PC-9 (cell line): ENCODE measurements at regions of chr6 and their contacts with region 1.

Region 1: GRCh38 chr6:25534942-25535631 is 116.9 kb upstream of the SCGN start:
- DNase-seq: no peak
- H3K4me3 ChIP-seq: no peak overlapping the region
- H3K27ac ChIP-seq: no peak overlapping the region
- H3K4me1 ChIP-seq: no peaks in the 10 kb centered on the region
- H3K27me3 ChIP-seq: no peaks in the 10 kb centered on the region
- CTCF ChIP-seq: no peak

Region 2: GRCh38 chr6:25359191-25359861 is 175.8 kb before region 1 on chr6:
- CTCF ChIA-PET with region 1: no interaction called
- POLR2A ChIA-PET with region 1: interaction called, 16 read pairs
- intact Hi-C with region 1: no loop called
- DNase-seq: no peak
- H3K4me3 ChIP-seq: no peak overlapping the region
- H3K27ac ChIP-seq: no peak overlapping the region
- H3K4me1 ChIP-seq: no peaks in the 10 kb centered on the region
- H3K27me3 ChIP-seq: no peaks in the 10 kb centered on the region
- CTCF ChIP-seq: no peak

Region 3: DNA sequence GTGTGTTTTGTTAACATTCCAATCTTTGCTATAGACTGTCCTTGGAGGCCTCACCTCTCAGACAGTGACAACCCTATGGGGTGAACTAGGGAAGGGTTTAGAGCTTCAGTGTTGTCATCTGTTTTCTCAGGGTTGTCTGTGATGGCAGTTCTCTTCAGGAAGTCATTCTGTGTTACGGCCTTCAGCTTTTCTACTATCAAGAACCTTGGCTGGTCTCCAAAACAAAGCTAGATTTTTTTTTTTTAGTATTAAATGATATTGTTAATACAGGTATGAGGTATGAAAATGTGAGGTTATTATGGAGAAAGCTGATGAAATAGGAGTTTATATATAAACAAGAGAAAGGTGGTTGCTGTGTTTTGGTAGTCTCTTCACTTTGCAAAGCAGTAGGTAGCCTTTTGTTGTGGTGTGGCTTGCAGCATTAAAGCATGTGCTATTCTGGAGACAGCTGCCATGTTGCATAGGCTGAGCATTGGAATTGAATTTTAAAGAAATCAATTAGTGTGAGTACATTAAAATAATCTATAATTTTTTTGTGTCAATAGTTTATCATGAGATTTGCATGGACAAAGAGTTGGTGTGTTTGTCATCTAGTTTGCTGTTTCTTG is 93.3 kb before region 1 on chr6:
- CTCF ChIA-PET with region 1: no interaction called
- POLR2A ChIA-PET with region 1: interaction called, 18 read pairs
- intact Hi-C with region 1: no loop called
- DNase-seq: no peak
- H3K4me3 ChIP-seq: no peak overlapping the region
- H3K27ac ChIP-seq: no peak overlapping the region
- H3K4me1 ChIP-seq: no peaks in the 10 kb centered on the region
- H3K27me3 ChIP-seq: no peaks in the 10 kb centered on the region
- CTCF ChIP-seq: no peak

Region 4: DNA sequence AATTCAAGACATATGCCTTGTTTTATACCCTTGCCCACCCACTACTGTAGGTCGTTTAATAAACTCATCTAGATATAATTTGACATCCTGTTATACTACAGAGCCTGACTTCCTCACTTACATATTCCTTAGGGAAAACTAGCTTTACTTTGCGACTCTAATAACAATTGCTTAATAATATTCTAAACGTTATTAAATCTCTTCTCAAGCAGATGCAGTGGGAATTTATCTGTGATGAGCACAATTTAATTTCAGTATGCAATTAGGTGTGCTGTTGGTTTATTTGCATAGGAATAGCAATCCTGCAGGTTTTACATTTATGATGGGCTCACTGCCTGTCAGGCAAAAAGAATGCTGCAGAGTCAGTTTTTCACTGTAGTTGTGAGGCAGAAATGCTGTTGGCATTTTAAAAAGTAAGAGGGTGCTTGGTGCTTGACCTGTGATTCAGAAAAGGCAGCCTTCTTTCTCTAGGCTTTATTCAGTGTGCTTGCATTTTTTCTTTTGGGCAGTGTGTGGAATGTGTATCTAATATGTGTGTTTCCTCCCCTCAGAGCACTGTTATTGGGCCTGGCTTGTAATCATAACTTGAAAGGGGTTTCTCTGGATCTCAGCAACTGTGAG is 35.4 kb before region 1 on chr6:
- CTCF ChIA-PET with region 1: no interaction called
- POLR2A ChIA-PET with region 1: no interaction called
- intact Hi-C with region 1: loop called (anchors 2 kb)
- DNase-seq: peak; percentile 54 to 93
- H3K4me3 ChIP-seq: no peak overlapping the region
- H3K27ac ChIP-seq: peak overlapping the region; percentile 68
- H3K4me1 ChIP-seq: peaks cover 25% of the 10 kb centered on the region
- H3K27me3 ChIP-seq: no peaks in the 10 kb centered on the region
- CTCF ChIP-seq: no peak

Region 5: GRCh38 chr6:26743157-26743821 is 1208.2 kb after region 1 on chr6:
- CTCF ChIA-PET with region 1: no interaction called
- POLR2A ChIA-PET with region 1: no interaction called
- intact Hi-C with region 1: no loop called
- DNase-seq: peak; percentile 41 to 48
- H3K4me3 ChIP-seq: peak overlapping the region; percentile 47; the same call in 1 of the 2 replicates
- H3K27ac ChIP-seq: no peak overlapping the region
- H3K4me1 ChIP-seq: no peaks in the 10 kb centered on the region
- H3K27me3 ChIP-seq: no peaks in the 10 kb centered on the region
- CTCF ChIP-seq: no peak